Dendritic cell treated with granulocyte-macrophage colony-stimulating factor and Interleukin-4, amounts not matched to agents 40 ng/mL and 50 ng/mL, for 4 days (primary cell): ENCODE measurements at regions of chr10 and their contacts with region 1.

Region 1: DNA sequence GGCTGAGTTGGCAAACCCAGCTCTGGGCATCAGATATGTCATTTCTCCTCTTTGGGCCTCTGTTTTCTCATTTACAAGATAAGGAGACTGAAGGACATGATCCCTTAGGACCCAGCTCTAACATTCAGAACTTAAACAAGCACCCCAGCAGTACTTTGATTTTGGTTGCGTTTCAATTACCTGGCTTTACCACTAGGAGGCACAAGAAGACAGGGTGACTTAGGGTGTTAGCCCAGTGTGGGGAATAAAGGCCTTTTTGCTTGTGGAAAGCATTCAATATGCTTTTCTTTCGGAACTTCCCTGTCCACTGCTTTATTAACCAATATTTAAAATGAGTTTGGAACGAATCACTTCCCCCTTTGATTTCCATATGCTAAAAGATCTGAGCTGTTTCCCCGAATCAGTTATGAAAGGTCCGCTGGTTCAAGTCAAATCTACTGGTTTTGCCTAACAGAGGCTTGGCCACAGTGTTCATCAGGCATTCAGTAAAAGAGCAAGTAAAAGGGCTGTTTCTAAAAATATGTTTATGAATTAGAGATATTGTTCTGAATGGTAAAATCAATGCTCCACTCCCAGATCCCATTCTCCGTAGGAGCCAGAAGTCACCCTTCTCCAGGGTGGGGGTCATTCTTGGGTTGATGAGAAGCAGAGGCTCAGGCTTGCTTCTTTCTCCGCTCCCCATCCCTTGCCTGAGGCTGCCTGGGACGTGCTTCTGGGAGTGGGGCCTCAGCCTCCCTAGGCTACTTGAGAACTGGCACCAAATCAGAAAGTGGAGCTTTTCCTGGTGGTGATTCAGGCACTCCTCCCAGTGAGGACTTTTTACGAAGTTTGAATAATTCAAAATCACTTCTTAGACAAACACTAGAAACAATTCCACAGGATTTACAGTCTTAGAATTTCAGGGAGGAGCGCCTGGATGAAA is 105.5 kb downstream of the MYOF start:
- H3K4me3 Mint-ChIP-seq: no peak overlapping the region
- H3K27ac Mint-ChIP-seq: peak overlapping the region; percentile 37
- H3K4me1 Mint-ChIP-seq: peaks cover 26% of the 10 kb centered on the region
- H3K27me3 Mint-ChIP-seq: no peaks in the 10 kb centered on the region

Region 2: GRCh38 chr10:93288654-93289634 is 87.7 kb before region 1 on chr10:
- intact Hi-C with region 1: no loop called
- H3K4me3 Mint-ChIP-seq: no peak overlapping the region
- H3K27ac Mint-ChIP-seq: no peak overlapping the region
- H3K4me1 Mint-ChIP-seq: peaks cover 8% of the 10 kb centered on the region
- H3K27me3 Mint-ChIP-seq: peaks cover 8% of the 10 kb centered on the region

Region 3: GRCh38 chr10:93422151-93422550 is 45.5 kb after region 1 on chr10:
- intact Hi-C with region 1: loop called (anchors 1 kb)
- H3K4me3 Mint-ChIP-seq: no peak overlapping the region
- H3K27ac Mint-ChIP-seq: no peak overlapping the region
- H3K4me1 Mint-ChIP-seq: peaks cover 35% of the 10 kb centered on the region
- H3K27me3 Mint-ChIP-seq: peaks cover 19% of the 10 kb centered on the region

Region 4: GRCh38 chr10:93482145-93482834 is 105.7 kb after region 1 on chr10 and contains the start of gene MYOF:
- intact Hi-C with region 1: loop called (anchors 1 kb)
- H3K4me3 Mint-ChIP-seq: peak within 1 kb of the TSS; percentile 98
- H3K27ac Mint-ChIP-seq: peak within 1 kb of the TSS; percentile 96
- H3K4me1 Mint-ChIP-seq: peaks cover 27% of the 10 kb centered on the region
- H3K27me3 Mint-ChIP-seq: no peaks in the 10 kb centered on the region

Region 5: GRCh38 chr10:93515071-93516005 is 138.7 kb after region 1 on chr10:
- intact Hi-C with region 1: loop called (anchors 1 kb)
- H3K4me3 Mint-ChIP-seq: peak overlapping the region; percentile 46
- H3K27ac Mint-ChIP-seq: peak overlapping the region; percentile 92
- H3K4me1 Mint-ChIP-seq: peaks cover 40% of the 10 kb centered on the region
- H3K27me3 Mint-ChIP-seq: no peaks in the 10 kb centered on the region

Region 6: GRCh38 chr10:93680412-93681047 is 303.9 kb after region 1 on chr10:
- intact Hi-C with region 1: loop called (anchors 1 kb)
- H3K4me3 Mint-ChIP-seq: no peak overlapping the region
- H3K27ac Mint-ChIP-seq: no peak overlapping the region
- H3K4me1 Mint-ChIP-seq: peaks cover 10% of the 10 kb centered on the region
- H3K27me3 Mint-ChIP-seq: no peaks in the 10 kb centered on the region